CD8-positive, alpha-beta T cell (primary cell): ENCODE measurements at regions of chr1 and their contacts with region 1.

Region 1: DNA sequence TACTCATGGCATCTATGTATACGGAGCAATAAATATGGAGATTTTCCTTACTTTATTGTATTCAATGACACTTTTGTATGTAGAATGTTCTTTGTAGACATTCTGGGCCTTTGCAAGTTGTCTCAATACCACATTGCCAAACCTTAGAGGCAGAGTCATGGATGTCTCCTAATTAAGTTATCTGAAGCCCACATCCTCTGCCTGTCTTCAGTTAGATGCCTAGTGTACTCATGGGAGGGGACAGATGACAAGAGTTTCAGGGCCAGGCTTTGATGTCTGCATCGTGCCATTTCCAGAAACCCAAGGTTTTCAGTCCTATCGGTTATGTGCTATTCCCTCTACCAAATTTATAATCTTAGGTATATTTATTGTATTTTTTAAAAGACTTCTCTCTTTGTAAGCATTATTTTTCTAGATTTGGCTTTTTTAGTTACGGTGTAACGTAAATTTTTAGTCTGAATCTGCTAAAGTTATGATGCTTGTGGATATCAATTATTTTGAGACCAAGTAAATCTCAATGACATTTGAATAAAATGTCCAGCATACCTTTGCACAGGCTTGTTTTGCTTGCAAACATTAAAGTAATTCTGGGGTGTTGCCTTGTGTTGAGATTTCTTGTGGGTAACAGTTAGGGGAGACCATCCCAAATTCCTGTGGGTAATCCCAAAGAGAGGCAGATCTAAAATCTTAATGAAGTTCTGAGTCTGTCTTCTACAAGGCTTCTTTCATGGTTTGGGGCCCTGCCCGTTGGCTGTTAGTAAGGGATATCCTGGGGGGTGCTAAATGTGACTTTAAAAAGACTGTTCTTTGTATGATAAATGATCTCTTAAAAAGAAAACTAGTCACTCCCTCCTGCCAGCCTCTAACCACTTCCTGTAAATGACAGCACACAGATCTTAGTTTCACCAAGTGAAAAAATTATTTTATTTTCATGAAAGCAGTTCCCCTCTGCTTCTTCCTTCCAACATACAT is 8.0 kb upstream of the MACF1 start:
- DNase-seq: peak in 8 of 9 experiments; percentile 26 to 90 (median 70)
- ATAC-seq: peak; percentile 68
- H3K4me3 ChIP-seq: peak overlapping the region; percentile 4 to 9
- H3K4me3 Mint-ChIP-seq: peak overlapping the region; percentile 68
- H3K27ac ChIP-seq: peak overlapping the region; percentile 48 to 84
- H3K27ac Mint-ChIP-seq: peak overlapping the region; percentile 91
- H3K4me1 ChIP-seq: peaks cover 63% of the 10 kb centered on the region
- H3K4me1 Mint-ChIP-seq: peaks cover 80% of the 10 kb centered on the region
- H3K27me3 ChIP-seq: no peaks in the 10 kb centered on the region
- H3K27me3 Mint-ChIP-seq: no peaks in the 10 kb centered on the region
- CTCF ChIP-seq: no peak

Region 2: GRCh38 chr1:37931361-37932158 is 1265.0 kb before region 1 on chr1:
- CTCF ChIA-PET with region 1: no interaction called
- POLR2A ChIA-PET with region 1: no interaction called
- intact Hi-C with region 1: loop called in 1 of 2 experiments (anchors 10 kb)
- DNase-seq: peak; percentile 96 to 98 (median 97)
- ATAC-seq: peak; percentile 98
- H3K4me3 ChIP-seq: peak overlapping the region; percentile 79 to 89
- H3K4me3 Mint-ChIP-seq: peak overlapping the region; percentile 100
- H3K27ac ChIP-seq: peak overlapping the region; percentile 40 to 66
- H3K27ac Mint-ChIP-seq: peak overlapping the region; percentile 89
- H3K4me1 ChIP-seq: peaks cover 26% of the 10 kb centered on the region
- H3K4me1 Mint-ChIP-seq: peaks cover 40% of the 10 kb centered on the region
- H3K27me3 ChIP-seq: no peaks in the 10 kb centered on the region
- H3K27me3 Mint-ChIP-seq: no peaks in the 10 kb centered on the region
- CTCF ChIP-seq: no peak

Region 3: DNA sequence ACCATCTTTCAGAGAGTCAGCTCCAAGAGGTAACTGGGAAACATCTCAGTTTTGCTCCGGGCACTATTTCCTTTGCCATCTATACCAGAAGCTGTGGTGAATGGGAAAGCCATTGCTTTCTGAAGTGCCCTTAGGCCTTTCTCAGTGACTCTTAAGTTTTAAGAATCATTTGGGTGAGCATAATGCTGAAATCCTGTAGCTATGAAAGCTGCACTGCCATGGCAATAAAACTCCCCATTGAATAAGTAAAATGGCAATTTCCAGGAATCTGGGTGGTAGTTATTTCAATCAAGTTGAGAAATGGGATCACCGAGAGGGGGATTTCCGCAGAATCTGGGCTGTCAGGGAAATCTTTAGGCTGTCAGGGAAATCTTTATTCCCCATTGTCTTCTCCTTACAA is 18.8 kb before region 1 on chr1:
- CTCF ChIA-PET with region 1: interaction called, 49 read pairs
- POLR2A ChIA-PET with region 1: interaction called, 5 read pairs
- intact Hi-C with region 1: no loop called
- DNase-seq: no peak
- ATAC-seq: no peak
- H3K4me3 ChIP-seq: no peak overlapping the region
- H3K4me3 Mint-ChIP-seq: no peak overlapping the region
- H3K27ac ChIP-seq: no peak overlapping the region
- H3K27ac Mint-ChIP-seq: no peak overlapping the region
- H3K4me1 ChIP-seq: no peaks in the 10 kb centered on the region
- H3K4me1 Mint-ChIP-seq: no peaks in the 10 kb centered on the region
- H3K27me3 ChIP-seq: no peaks in the 10 kb centered on the region
- H3K27me3 Mint-ChIP-seq: no peaks in the 10 kb centered on the region
- CTCF ChIP-seq: no peak

Region 4: GRCh38 chr1:39220891-39221870 is 24.7 kb after region 1 on chr1:
- CTCF ChIA-PET with region 1: interaction called, 133 read pairs
- POLR2A ChIA-PET with region 1: interaction called, 35 read pairs
- intact Hi-C with region 1: loop called (anchors 1 to 5 kb)
- DNase-seq: no peak
- ATAC-seq: no peak
- H3K4me3 ChIP-seq: no peak overlapping the region
- H3K4me3 Mint-ChIP-seq: peak overlapping the region; percentile 32
- H3K27ac ChIP-seq: no peak overlapping the region
- H3K27ac Mint-ChIP-seq: peak overlapping the region; percentile 37
- H3K4me1 ChIP-seq: peaks cover 63% of the 10 kb centered on the region
- H3K4me1 Mint-ChIP-seq: peaks cover 73% of the 10 kb centered on the region
- H3K27me3 ChIP-seq: no peaks in the 10 kb centered on the region
- H3K27me3 Mint-ChIP-seq: no peaks in the 10 kb centered on the region
- CTCF ChIP-seq: no peak

Region 5: GRCh38 chr1:39258146-39258924 is 61.8 kb after region 1 on chr1:
- CTCF ChIA-PET with region 1: interaction called, 622 read pairs
- POLR2A ChIA-PET with region 1: interaction called, 21 read pairs
- intact Hi-C with region 1: loop called (anchors 1 kb)
- DNase-seq: peak; percentile 40 to 81 (median 68)
- ATAC-seq: peak; percentile 77
- H3K4me3 ChIP-seq: no peak overlapping the region
- H3K4me3 Mint-ChIP-seq: no peak overlapping the region
- H3K27ac ChIP-seq: peak overlapping the region in 1 of 2 experiments; percentile 28
- H3K27ac Mint-ChIP-seq: peak overlapping the region; percentile 57
- H3K4me1 ChIP-seq: peaks cover 11% of the 10 kb centered on the region
- H3K4me1 Mint-ChIP-seq: peaks cover 28% of the 10 kb centered on the region
- H3K27me3 ChIP-seq: no peaks in the 10 kb centered on the region
- H3K27me3 Mint-ChIP-seq: no peaks in the 10 kb centered on the region
- CTCF ChIP-seq: peak; percentile 91

Region 6: DNA sequence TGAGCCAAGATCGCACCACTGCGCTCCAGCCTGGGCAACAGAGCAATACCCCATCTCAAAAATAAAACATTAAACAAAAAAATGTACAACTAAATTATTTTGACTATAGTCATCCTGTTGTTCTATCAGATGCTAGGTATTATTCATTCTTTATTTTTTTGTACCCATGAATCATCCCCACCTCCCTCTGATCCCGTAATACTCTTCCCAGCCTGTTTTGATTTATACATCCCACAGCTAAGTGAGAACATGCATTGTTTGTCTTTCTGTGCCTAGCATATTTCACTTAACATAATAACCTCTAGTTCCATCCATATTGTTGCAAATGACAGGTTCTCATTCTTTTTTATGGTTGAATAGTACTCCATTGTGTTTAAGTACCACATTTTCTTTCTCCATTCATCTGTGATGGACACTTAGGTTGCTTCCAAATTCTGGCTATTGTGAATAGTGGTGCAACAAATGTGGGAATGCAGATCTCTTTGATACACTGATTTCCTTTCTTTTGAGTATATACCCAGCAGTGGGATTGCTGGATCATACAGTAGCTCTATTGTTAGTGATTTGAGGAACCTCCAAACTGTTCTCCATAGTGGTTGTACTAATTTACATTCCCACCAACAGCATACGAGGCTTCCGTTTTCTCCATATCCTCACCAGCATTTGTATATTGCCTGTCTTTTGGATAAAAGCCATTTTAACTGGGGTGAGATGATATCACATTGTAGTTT is 92.4 kb after region 1 on chr1:
- CTCF ChIA-PET with region 1: interaction called, 18 read pairs
- POLR2A ChIA-PET with region 1: no interaction called
- intact Hi-C with region 1: no loop called
- DNase-seq: no peak
- ATAC-seq: no peak
- H3K4me3 ChIP-seq: no peak overlapping the region
- H3K4me3 Mint-ChIP-seq: no peak overlapping the region
- H3K27ac ChIP-seq: no peak overlapping the region
- H3K27ac Mint-ChIP-seq: no peak overlapping the region
- H3K4me1 ChIP-seq: no peaks in the 10 kb centered on the region
- H3K4me1 Mint-ChIP-seq: peaks cover 5% of the 10 kb centered on the region
- H3K27me3 ChIP-seq: no peaks in the 10 kb centered on the region
- H3K27me3 Mint-ChIP-seq: no peaks in the 10 kb centered on the region
- CTCF ChIP-seq: no peak

Region 7: DNA sequence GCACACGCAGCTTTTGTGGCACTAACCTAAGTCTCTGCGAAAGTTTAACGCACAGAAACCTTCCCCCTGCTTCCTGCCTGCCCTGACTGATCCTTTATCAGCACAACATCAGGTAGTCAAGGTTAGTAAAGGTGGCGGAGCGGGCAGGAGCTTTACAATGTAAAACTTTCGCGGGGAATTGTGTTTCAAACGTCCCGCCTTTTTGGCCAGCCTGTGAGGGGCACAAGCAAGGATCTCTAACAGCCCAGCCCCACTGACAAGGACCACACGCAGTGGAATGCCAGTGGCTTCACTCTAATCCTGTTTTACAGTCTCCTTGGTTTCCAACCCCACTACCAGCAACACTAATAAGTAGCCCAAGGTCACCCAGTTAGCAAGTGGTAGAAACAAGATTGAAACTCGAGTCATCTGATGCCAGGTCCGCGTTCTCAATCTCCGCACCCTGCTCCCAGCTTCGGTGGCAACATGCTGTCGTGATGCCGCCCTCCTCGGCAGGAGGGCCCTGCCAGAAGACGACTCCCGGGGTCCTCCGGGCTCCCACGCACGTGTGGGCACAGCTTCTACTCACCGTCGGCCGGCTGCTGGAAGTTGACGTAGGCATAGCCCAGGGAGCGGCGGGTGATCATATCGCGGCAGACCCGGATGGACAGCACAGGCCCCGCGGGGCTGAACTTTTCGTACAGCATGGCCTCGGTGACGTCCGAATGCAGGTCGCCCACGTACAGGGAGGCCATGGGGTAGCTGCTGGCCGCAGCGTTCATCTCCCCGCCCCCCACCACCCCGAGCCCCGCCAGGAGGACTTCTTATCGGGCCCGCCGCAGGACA is 378.9 kb after region 1 on chr1:
- CTCF ChIA-PET with region 1: no interaction called
- POLR2A ChIA-PET with region 1: no interaction called
- intact Hi-C with region 1: loop called in 1 of 2 experiments (anchors 10 kb)
- DNase-seq: peak; percentile 16 to 78 (median 57)
- ATAC-seq: peak; percentile 65
- H3K4me3 ChIP-seq: peak overlapping the region; percentile 64 to 75
- H3K4me3 Mint-ChIP-seq: peak overlapping the region; percentile 93
- H3K27ac ChIP-seq: peak overlapping the region; percentile 68 to 72
- H3K27ac Mint-ChIP-seq: peak overlapping the region; percentile 92
- H3K4me1 ChIP-seq: peaks cover 41% of the 10 kb centered on the region
- H3K4me1 Mint-ChIP-seq: peaks cover 44% of the 10 kb centered on the region
- H3K27me3 ChIP-seq: no peaks in the 10 kb centered on the region
- H3K27me3 Mint-ChIP-seq: no peaks in the 10 kb centered on the region
- CTCF ChIP-seq: no peak